Activated CD4-positive, alpha-beta T cell treated with anti-CD3 and anti-CD28 coated beads for 36 hours (primary cell): ENCODE measurements at regions of chr2 and their contacts with region 1.

Region 1: GRCh38 chr2:44934983-44935728 is 6.3 kb upstream of the SIX3 start:
- DNase-seq: no peak
- ATAC-seq: no peak
- H3K4me3 Mint-ChIP-seq: no peak overlapping the region
- H3K27ac Mint-ChIP-seq: no peak overlapping the region
- H3K4me1 Mint-ChIP-seq: peaks cover 23% of the 10 kb centered on the region
- H3K27me3 Mint-ChIP-seq: peaks cover 75% of the 10 kb centered on the region

Region 2: DNA sequence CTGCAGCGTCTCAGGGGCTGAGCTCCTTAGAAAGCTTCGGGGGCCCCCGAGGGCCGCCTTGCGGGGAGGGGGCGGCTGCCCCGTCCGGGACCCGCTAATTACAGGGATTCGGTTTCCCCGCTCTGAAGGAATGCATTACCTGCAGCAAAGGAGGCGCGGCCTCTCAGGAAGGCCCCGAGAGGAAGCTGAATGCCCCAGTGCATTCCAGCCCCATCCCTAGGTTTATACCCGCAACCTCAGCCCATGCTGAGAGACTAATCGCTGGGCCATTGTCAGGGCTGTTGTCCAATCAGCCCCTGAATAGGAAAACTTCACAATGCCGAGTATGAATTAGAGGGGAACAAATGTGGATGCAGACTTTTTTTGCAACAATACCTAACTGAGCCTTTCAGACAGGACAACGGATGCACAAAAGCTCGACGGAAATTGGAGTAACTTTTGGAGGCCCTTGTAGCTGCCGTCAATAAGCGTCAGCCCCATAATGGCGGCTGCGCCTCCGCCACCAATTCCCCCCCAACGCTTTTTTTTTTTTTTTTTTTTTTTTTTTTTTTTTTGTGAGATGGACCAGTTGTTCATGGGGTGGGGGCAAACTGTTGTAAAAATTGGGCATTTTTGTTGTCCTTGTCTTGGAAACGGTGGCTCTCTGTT is 132.3 kb before region 1 on chr2:
- CTCF ChIA-PET with region 1: no interaction called
- POLR2A ChIA-PET with region 1: no interaction called
- intact Hi-C with region 1: loop called (anchors 1 to 5 kb)
- DNase-seq: no peak
- ATAC-seq: no peak
- H3K4me3 Mint-ChIP-seq: no peak overlapping the region
- H3K27ac Mint-ChIP-seq: no peak overlapping the region
- H3K4me1 Mint-ChIP-seq: peaks cover 14% of the 10 kb centered on the region
- H3K27me3 Mint-ChIP-seq: peaks cover 77% of the 10 kb centered on the region

Region 3: DNA sequence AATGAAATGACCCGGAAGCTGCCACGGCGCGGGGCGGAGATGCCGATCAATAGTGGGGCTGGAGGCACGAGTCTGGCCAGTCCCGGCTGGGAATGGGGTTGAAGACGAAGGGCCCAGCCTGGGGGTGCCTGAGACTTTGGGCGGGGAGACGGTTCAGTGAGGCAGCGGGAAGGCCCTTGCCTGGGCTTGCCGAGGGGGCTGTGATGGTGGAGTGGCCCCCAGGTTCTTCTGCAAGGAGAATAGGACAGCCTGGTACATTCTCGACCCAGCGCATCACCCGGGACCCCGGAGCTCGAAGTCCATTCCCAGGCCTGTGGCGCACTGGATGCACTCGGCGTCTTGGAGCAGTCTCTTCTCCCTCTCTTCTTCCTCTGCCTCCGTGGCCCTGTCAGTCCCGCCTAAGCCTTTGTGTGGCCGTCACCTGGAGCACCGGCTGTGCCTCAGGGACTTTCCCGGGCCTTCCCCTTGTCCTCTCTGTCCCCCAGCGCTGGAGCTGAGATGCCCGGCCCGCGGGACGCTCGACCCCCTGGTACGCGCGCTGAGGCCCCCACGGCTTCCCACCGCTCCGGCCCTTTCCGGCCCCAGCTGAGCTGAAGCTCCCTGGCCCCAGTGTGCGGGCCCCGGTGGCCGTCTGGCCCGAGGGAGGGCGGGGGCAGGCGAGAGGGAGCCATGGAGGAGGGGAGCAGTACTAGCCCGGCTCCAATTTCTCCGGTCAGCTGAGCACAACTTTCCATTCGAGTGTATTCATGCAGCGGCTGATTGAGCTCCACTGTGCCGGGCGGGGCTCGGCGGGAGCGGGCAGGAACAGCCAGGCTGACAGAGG is 14.4 kb after region 1 on chr2:
- CTCF ChIA-PET with region 1: interaction called, 30 read pairs
- POLR2A ChIA-PET with region 1: no interaction called
- intact Hi-C with region 1: loop called (anchors 2 kb)
- DNase-seq: no peak
- ATAC-seq: no peak
- H3K4me3 Mint-ChIP-seq: no peak overlapping the region
- H3K27ac Mint-ChIP-seq: no peak overlapping the region
- H3K4me1 Mint-ChIP-seq: peaks cover 19% of the 10 kb centered on the region
- H3K27me3 Mint-ChIP-seq: peaks cover 80% of the 10 kb centered on the region

Region 4: DNA sequence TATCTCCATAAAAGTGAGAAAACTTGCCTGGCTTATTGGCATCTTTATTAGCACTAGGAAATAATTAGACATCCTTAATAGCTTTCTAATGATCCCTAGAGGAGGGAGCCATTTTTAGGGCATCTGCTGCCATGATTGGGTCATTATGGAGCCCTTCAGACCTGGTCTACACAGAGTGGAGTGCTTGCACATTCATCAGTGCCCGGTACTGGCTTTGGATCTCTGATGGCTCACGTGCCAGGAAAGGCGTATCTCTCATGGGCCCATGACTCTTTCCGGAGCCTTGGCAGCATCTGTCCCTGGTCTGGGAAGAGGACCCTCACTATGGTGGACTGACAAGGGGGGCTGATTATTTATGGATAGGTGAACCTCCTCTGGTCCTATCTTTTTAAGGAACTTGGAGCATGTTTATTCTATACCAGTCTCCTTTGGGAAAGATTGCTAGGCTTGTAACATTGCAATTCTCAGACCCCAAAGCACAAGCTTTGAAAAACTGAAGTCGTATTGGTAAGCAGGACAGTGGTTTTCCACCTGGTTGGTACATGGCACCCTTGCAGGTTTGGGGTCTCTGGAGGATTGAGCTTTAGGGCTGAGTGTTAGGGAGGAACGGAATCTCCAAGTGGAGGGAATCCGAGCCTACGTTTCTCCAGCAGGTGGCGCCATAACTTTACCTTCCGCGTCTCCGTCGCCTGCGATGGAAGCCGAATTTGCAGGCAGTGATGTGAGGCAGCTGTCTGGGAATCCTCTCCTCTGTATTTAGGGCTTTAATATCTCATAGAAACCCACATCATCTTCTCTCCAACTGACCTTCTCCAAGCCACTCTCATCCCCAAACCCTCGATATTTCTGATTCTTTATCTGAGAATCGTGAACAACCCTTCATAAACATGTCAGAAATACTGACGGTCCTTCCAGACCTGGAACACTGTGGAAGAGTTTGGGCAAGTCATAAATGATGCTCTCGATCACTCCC is 46.3 kb after region 1 on chr2:
- CTCF ChIA-PET with region 1: no interaction called
- POLR2A ChIA-PET with region 1: no interaction called
- intact Hi-C with region 1: no loop called
- DNase-seq: peak; percentile 84
- ATAC-seq: peak; percentile 58
- H3K4me3 Mint-ChIP-seq: no peak overlapping the region
- H3K27ac Mint-ChIP-seq: no peak overlapping the region
- H3K4me1 Mint-ChIP-seq: peaks cover 2% of the 10 kb centered on the region
- H3K27me3 Mint-ChIP-seq: peaks cover 14% of the 10 kb centered on the region

Region 5: DNA sequence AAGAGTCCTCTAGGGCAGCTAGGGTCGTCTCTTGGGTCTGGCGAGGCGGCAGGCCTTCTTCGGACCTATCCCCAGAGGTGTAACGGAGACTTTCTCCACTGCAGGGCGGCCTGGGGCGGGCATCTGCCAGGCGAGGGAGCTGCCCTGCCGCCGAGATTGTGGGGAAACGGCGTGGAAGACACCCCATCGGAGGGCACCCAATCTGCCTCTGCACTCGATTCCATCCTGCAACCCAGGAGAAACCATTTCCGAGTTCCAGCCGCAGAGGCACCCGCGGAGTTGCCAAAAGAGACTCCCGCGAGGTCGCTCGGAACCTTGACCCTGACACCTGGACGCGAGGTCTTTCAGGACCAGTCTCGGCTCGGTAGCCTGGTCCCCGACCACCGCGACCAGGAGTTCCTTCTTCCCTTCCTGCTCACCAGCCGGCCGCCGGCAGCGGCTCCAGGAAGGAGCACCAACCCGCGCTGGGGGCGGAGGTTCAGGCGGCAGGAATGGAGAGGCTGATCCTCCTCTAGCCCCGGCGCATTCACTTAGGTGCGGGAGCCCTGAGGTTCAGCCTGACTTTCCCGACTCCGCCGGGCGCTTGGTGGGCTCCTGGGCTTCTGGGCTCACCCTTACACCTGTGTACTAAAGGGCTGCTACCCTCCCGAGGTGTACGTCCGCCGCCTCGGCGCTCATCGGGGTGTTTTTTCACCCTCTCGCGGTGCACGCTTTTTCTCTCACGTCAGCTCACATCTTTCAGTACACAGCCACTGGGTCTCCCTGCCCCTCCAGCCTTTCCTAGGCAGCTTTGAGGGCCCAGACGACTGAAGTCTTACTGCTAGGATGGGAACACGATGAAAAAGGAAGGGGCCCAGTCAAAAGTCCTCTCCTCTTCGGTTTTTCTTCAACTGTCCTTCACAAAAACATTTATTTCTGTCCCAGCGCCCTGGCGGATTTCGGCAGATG is 66.0 kb after region 1 on chr2:
- CTCF ChIA-PET with region 1: no interaction called
- POLR2A ChIA-PET with region 1: no interaction called
- intact Hi-C with region 1: loop called (anchors 2 to 5 kb)
- DNase-seq: peak; percentile 27
- ATAC-seq: no peak
- H3K4me3 Mint-ChIP-seq: peak overlapping the region; percentile 47
- H3K27ac Mint-ChIP-seq: no peak overlapping the region
- H3K4me1 Mint-ChIP-seq: peaks cover 20% of the 10 kb centered on the region
- H3K27me3 Mint-ChIP-seq: peaks cover 75% of the 10 kb centered on the region

Region 6: DNA sequence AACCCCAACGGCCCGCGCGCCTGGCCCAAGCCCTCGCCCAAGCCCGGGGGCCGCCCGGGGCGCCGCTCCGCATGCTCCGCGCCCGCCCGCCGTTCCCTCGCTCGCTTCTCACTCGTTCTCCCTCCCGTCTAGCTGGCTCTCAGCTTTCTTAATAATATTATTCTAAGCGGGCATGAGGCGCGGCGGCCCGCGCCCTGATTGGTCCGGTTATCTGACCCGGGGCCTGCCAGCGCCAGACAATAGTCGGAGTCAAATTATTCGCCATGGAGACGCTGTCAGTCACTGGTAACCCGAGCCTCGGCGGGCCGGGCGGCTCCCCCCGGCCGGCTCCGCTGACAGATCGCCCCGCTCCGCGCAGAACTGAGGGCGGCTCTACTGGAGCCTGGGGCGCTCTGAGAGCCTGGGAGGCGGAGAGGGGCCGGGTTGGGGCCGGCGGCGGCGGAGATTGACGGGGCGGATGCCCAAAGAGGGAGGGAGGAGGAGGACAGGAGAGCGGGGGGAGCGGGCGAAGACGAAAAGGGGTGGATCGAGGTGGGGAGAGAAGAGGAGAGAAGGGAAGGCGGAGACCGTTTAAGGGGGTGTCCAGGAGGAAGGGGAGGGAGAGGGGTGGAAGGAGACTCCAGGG is 74.3 kb after region 1 on chr2 and contains the start of gene SIX2:
- CTCF ChIA-PET with region 1: no interaction called
- POLR2A ChIA-PET with region 1: no interaction called
- intact Hi-C with region 1: loop called (anchors 2 to 5 kb)
- DNase-seq: peak; percentile 38
- ATAC-seq: peak; percentile 16
- H3K4me3 Mint-ChIP-seq: peak within 1 kb of the TSS; percentile 53
- H3K27ac Mint-ChIP-seq: no peak within 1 kb of the TSS
- H3K4me1 Mint-ChIP-seq: peaks cover 21% of the 10 kb centered on the region
- H3K27me3 Mint-ChIP-seq: peaks cover 67% of the 10 kb centered on the region
- total RNA-seq, gene SIX2: not detected

Region 7: GRCh38 chr2:45102141-45102540 is 167.0 kb after region 1 on chr2:
- CTCF ChIA-PET with region 1: no interaction called
- POLR2A ChIA-PET with region 1: no interaction called
- intact Hi-C with region 1: no loop called
- DNase-seq: no peak
- ATAC-seq: no peak
- H3K4me3 Mint-ChIP-seq: no peak overlapping the region
- H3K27ac Mint-ChIP-seq: no peak overlapping the region
- H3K4me1 Mint-ChIP-seq: peaks cover 3% of the 10 kb centered on the region
- H3K27me3 Mint-ChIP-seq: peaks cover 17% of the 10 kb centered on the region

Region 8: GRCh38 chr2:45169339-45170190 is 234.4 kb after region 1 on chr2:
- CTCF ChIA-PET with region 1: no interaction called
- POLR2A ChIA-PET with region 1: no interaction called
- intact Hi-C with region 1: loop called in 1 of 2 experiments (anchors 2 kb)
- DNase-seq: peak; percentile 21
- ATAC-seq: peak; percentile 26
- H3K4me3 Mint-ChIP-seq: peak overlapping the region; percentile 50
- H3K27ac Mint-ChIP-seq: no peak overlapping the region
- H3K4me1 Mint-ChIP-seq: peaks cover 4% of the 10 kb centered on the region
- H3K27me3 Mint-ChIP-seq: peaks cover 57% of the 10 kb centered on the region

Region 9: DNA sequence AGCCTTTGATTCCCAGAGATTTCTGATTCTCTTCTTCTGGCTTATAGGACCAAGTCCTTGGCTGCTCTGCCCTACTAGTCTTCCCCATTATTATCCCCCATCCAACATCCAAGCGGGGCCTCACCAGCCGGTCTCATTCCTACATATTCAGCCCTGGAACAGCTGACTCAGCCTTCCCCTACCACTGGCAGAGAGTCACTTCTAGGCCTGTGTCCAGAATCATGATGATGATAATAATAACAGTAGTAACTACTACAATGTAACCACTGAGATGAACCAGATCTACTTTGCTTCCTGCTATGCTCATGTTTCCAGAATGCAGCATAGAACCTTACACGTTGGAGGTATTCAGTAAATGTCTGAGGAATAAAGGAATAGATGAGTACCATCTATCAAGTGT is 380.7 kb after region 1 on chr2:
- CTCF ChIA-PET with region 1: no interaction called
- POLR2A ChIA-PET with region 1: no interaction called
- intact Hi-C with region 1: no loop called
- DNase-seq: no peak
- ATAC-seq: no peak
- H3K4me3 Mint-ChIP-seq: no peak overlapping the region
- H3K27ac Mint-ChIP-seq: no peak overlapping the region
- H3K4me1 Mint-ChIP-seq: no peaks in the 10 kb centered on the region
- H3K27me3 Mint-ChIP-seq: peaks cover 4% of the 10 kb centered on the region